Activated CD4-positive, alpha-beta T cell treated with anti-CD3 and anti-CD28 coated beads, Interleukin-2, amount 10 ng/mL, durations not matched to agents 24 days and 14 days (primary cell): ENCODE measurements at regions of chr4 and their contacts with region 1.

Region 1: GRCh38 chr4:59553063-59553720 is 1646.9 kb upstream of the ADGRL3 start:
- DNase-seq: no peak
- H3K4me3 Mint-ChIP-seq: no peak overlapping the region
- H3K27ac Mint-ChIP-seq: peak overlapping the region; percentile 34
- H3K4me1 Mint-ChIP-seq: no peaks in the 10 kb centered on the region
- H3K27me3 Mint-ChIP-seq: no peaks in the 10 kb centered on the region

Region 2: DNA sequence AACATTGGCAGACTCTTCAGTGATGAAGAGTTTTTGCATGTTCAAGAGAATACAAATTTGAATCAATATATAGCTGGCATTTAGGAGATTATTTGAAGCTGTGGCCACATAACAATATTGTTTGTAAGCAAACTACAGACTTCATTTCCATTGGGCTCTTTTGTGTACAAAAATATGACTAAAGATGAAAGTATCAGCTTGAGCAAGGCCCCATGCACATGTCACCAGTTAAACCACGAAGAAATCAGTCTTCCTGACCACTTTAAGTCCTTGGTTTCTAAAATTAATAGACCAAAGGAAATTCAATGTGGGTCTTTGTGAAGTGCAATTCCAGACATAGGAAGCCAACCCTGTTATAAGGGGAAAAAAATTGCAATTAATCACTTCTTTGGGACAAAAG is 17.7 kb before region 1 on chr4:
- intact Hi-C with region 1: loop called (anchors 1 kb)
- DNase-seq: no peak
- H3K4me3 Mint-ChIP-seq: no peak overlapping the region
- H3K27ac Mint-ChIP-seq: no peak overlapping the region
- H3K4me1 Mint-ChIP-seq: no peaks in the 10 kb centered on the region
- H3K27me3 Mint-ChIP-seq: no peaks in the 10 kb centered on the region

Region 3: GRCh38 chr4:60117726-60118323 is 564.6 kb after region 1 on chr4:
- intact Hi-C with region 1: no loop called
- DNase-seq: no peak
- H3K4me3 Mint-ChIP-seq: no peak overlapping the region
- H3K27ac Mint-ChIP-seq: no peak overlapping the region
- H3K4me1 Mint-ChIP-seq: no peaks in the 10 kb centered on the region
- H3K27me3 Mint-ChIP-seq: no peaks in the 10 kb centered on the region